Heart left ventricle (tissue), 16 donors: ENCODE measurements at regions of chr22 and their contacts with region 1.

Region 1: DNA sequence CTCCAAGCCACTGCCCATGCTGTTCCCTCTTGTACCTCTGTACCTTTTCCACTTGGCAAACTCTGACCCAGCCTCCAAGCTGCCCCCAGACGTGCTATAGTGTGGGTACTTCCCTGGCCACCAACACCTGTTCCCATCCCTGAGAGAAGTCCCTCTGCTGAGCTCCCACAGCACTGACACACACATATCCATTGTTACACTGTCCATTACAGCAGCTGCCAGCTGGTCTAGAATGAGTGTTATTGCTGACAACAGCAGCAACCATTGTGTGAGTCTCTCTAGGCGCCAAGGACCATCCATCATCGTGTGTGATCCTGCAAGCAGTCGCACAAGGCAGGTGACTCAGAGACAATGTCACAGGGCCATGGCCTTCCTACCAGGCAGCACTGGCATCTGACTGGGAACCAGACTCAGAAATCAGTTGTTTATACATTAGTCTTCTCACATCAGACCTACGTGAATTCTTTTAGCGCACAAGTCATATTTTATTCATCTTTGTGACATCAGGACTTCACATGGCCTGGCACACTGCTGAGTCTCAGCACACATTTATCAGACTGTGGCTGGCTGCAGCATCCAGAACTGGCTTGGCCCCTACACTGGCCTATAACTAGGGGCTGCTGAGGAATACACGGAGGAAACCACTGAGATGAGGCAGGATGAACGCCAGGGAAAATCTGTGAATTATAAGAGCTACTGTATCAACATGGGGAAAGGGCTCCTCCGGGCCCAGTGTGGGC is 56.4 kb downstream of the SGSM3 start:
- DNase-seq: no peak
- ATAC-seq: no peak
- H3K4me3 ChIP-seq: no peak overlapping the region
- H3K27ac ChIP-seq: no peak overlapping the region
- H3K4me1 ChIP-seq: peaks cover 0 to 54% (median 6%) of the 10 kb centered on the region in 12 donors
- H3K27me3 ChIP-seq: no peaks in the 10 kb centered on the region
- CTCF ChIP-seq: no peak
- POLR2A ChIP-seq: no peak

Region 2: DNA sequence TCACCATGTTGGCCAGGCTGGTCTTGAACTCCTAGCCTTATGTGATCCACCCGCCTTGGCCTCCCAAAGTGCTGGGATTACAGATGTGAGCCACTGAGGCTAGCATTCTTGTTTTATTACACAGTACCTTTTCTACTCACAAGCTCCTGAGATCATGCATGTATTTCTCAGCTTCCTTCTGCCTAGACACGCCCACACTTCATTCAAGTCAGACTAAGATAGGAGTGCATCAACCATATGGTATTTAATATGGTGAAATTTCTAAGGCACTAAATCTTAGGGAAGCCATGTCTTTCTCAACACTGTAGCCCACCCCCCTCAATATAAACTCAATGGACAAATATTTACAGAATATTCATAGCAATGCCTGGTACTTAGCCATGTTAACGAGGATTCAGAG is 330.3 kb after region 1 on chr22:
- intact Hi-C with region 1: loop called in 2 of 10 experiments (anchors 10 kb)
- DNase-seq: no peak
- ATAC-seq: no peak
- H3K4me3 ChIP-seq: no peak overlapping the region
- H3K27ac ChIP-seq: no peak overlapping the region
- H3K4me1 ChIP-seq: peaks cover 0 to under 1% (median 0%) of the 10 kb centered on the region in 12 donors
- H3K27me3 ChIP-seq: no peaks in the 10 kb centered on the region
- CTCF ChIP-seq: no peak
- POLR2A ChIP-seq: no peak

Region 3: DNA sequence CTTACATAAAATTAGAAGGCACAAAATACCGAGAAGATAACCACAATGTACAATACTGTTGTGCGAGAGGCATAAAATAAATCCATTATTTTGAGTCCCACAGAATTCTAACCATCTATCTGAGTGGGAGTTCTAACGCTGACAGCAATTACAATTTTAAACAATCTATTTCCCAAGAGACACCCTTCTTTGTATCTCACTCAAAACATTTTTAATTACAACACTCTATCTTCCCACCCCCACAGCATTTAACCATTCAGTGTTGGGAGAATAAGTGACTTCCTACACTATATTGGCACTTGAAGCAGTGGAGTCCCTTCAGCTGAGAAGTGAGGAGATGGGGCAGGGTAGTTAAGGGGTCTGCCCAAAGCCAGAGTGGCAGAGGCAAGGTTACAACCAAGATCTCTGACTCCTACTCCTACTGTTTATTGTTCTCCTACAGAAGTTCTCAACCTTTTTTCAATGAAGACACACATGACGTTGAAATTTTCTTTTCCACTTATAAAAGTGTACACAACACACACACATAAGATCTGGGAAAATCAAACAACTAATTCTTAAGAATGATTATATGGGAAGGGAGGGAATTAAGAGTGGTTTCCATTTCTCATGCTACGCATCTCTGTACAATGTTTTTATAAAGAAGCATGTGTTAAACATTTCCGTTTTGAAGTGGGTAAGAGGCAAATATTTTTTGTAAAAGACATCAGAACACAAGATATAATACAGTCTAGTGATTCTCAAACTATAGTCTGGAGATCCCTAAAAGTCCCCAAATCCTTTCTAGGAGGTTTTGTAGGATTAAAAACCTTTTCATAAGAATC is 381.5 kb after region 1 on chr22:
- intact Hi-C with region 1: no loop called
- DNase-seq: no peak
- ATAC-seq: no peak
- H3K4me3 ChIP-seq: no peak overlapping the region
- H3K27ac ChIP-seq: no peak overlapping the region
- H3K4me1 ChIP-seq: peaks cover 0 to 5% (median 0%) of the 10 kb centered on the region in 12 donors
- H3K27me3 ChIP-seq: no peaks in the 10 kb centered on the region
- CTCF ChIP-seq: no peak
- POLR2A ChIP-seq: no peak